Activated CD4-positive, alpha-beta memory T cell treated with anti-CD3 and anti-CD28 coated beads, Interleukin-2, amount 10 ng/mL, durations not matched to agents 7 days and 5 days (primary cell): ENCODE measurements at regions of chr12 and their contacts with region 1.

Region 1: DNA sequence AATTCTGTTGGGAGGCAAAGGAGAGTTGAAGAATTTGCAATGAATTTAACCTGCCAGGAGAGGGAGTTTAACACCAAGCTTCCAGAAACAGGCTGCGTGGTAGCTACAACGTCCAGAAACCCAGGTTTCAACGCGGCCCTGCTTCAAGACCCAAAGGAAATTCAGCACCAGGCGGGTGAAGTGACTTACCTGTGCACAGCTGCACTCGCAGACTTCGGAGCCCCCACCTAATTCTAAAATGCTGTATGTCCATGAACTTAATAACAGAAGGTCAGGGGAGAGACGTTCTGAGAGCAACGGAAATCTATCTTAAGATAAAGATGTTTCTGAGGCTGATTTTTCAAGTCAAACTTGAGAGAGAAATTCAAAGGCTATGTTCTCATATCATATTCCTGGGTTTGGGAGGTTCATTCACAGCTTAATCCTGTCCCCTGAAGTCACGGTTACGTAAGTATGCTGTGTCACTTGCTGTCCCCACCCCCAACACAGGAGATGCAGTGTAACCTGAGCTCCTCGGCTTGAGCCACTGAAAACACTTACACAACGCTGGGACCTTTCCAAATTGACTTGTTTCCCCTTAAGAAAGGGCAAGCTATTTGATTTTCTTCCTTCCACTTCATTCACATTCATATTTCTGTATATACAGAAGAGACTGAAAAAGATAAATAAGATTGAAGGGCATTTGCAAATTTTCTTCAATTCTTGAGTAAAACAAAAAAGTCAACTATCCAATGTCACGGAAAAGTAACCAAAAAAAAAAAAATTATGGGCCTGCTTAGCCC is 22.7 kb downstream of the CLIP1 start:
- DNase-seq: peak; percentile 59
- H3K4me3 Mint-ChIP-seq: peak overlapping the region; percentile 34
- H3K27ac Mint-ChIP-seq: peak overlapping the region; percentile 71
- H3K4me1 Mint-ChIP-seq: peaks cover 40% of the 10 kb centered on the region
- H3K27me3 Mint-ChIP-seq: no peaks in the 10 kb centered on the region

Region 2: DNA sequence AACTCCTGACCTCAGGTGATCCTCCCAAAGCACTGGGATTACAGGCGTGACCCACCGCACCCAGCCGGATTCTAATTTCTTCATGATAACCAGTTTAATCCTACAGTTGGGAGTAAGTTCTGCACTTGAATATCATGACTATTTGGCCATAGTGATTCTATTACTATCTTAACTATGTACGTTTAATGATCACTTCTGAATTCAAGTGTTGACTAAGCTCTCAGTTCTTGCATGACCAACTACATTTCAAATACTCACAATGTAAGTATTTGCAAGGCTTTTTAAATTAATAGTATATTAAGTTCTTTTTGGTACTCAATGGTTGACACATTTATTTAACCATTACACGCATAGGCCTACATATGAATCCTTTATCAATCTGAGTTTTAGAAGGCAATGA is 116.1 kb before region 1 on chr12:
- CTCF ChIA-PET with region 1: no interaction called
- POLR2A ChIA-PET with region 1: no interaction called
- DNase-seq: no peak
- H3K4me3 Mint-ChIP-seq: no peak overlapping the region
- H3K27ac Mint-ChIP-seq: no peak overlapping the region
- H3K4me1 Mint-ChIP-seq: peaks cover 8% of the 10 kb centered on the region
- H3K27me3 Mint-ChIP-seq: no peaks in the 10 kb centered on the region

Region 3: GRCh38 chr12:122336015-122336946 is 63.5 kb before region 1 on chr12:
- CTCF ChIA-PET with region 1: interaction called, 11 read pairs
- POLR2A ChIA-PET with region 1: no interaction called
- DNase-seq: peak; percentile 55
- H3K4me3 Mint-ChIP-seq: no peak overlapping the region
- H3K27ac Mint-ChIP-seq: peak overlapping the region; percentile 53
- H3K4me1 Mint-ChIP-seq: peaks cover 18% of the 10 kb centered on the region
- H3K27me3 Mint-ChIP-seq: no peaks in the 10 kb centered on the region

Region 4: GRCh38 chr12:122389697-122390096 is 10.1 kb before region 1 on chr12:
- CTCF ChIA-PET with region 1: interaction called, 16 read pairs
- POLR2A ChIA-PET with region 1: interaction called, 5 read pairs
- DNase-seq: no peak
- H3K4me3 Mint-ChIP-seq: no peak overlapping the region
- H3K27ac Mint-ChIP-seq: no peak overlapping the region
- H3K4me1 Mint-ChIP-seq: peaks cover 9% of the 10 kb centered on the region
- H3K27me3 Mint-ChIP-seq: no peaks in the 10 kb centered on the region

Region 5: GRCh38 chr12:122413516-122414404 is 14.0 kb after region 1 on chr12:
- CTCF ChIA-PET with region 1: interaction called, 30 read pairs
- POLR2A ChIA-PET with region 1: interaction called, 17 read pairs
- DNase-seq: no peak
- H3K4me3 Mint-ChIP-seq: no peak overlapping the region
- H3K27ac Mint-ChIP-seq: peak overlapping the region; percentile 91
- H3K4me1 Mint-ChIP-seq: peaks cover 40% of the 10 kb centered on the region
- H3K27me3 Mint-ChIP-seq: no peaks in the 10 kb centered on the region

Region 6: GRCh38 chr12:122421821-122422729 is 22.3 kb after region 1 on chr12 and contains the start of gene CLIP1:
- CTCF ChIA-PET with region 1: interaction called, 26 read pairs
- POLR2A ChIA-PET with region 1: interaction called, 12 read pairs
- DNase-seq: peak; percentile 68
- H3K4me3 Mint-ChIP-seq: peak within 1 kb of the TSS; percentile 91
- H3K27ac Mint-ChIP-seq: peak within 1 kb of the TSS; percentile 87
- H3K4me1 Mint-ChIP-seq: peaks cover 42% of the 10 kb centered on the region
- H3K27me3 Mint-ChIP-seq: peaks cover 2% of the 10 kb centered on the region
- total RNA-seq, gene CLIP1: 65.3 to 73.4 TPM

Region 7: GRCh38 chr12:122471324-122472226 is 71.8 kb after region 1 on chr12:
- CTCF ChIA-PET with region 1: interaction called, 181 read pairs
- POLR2A ChIA-PET with region 1: interaction called, 33 read pairs
- DNase-seq: no peak
- H3K4me3 Mint-ChIP-seq: no peak overlapping the region
- H3K27ac Mint-ChIP-seq: no peak overlapping the region
- H3K4me1 Mint-ChIP-seq: peaks cover 23% of the 10 kb centered on the region
- H3K27me3 Mint-ChIP-seq: no peaks in the 10 kb centered on the region